ENCODE measurements at regions of chr11 and their contacts with region 1.

Region 1: GRCh38 chr11:76235233-76236091 is 29.2 kb upstream of the WNT11 start:
- DNase-seq: peak; percentile 86
- H3K4me3 Mint-ChIP-seq: peak overlapping the region; percentile 89
- H3K27ac Mint-ChIP-seq: peak overlapping the region; percentile 90
- H3K4me1 Mint-ChIP-seq: peaks cover 49% of the 10 kb centered on the region
- H3K27me3 Mint-ChIP-seq: peaks cover 15% of the 10 kb centered on the region

Region 2: DNA sequence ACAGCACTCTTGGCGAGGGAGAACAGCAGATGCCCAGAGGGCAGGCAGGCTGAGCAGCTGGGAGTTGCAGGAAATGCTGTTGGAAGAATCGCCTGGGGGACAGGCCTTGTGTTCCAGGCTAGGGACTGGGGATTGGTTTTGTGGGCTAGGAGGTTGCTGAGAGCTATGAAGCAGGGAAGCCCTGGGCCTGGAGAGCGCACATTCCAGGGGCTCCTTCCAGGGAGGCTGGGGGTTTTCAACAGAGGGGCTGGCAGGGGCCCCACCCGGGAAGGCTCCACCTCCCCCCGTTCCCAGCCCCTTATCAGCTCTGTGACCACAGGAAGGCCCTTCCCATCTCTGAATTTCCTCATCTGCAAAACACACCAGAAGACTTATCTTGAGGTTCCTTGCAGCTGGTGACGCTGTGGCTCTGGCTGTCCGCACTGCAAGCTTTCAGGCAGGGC is 50.9 kb before region 1 on chr11:
- intact Hi-C with region 1: no loop called
- DNase-seq: no peak
- H3K4me3 Mint-ChIP-seq: no peak overlapping the region
- H3K27ac Mint-ChIP-seq: no peak overlapping the region
- H3K4me1 Mint-ChIP-seq: no peaks in the 10 kb centered on the region
- H3K27me3 Mint-ChIP-seq: no peaks in the 10 kb centered on the region

Region 3: DNA sequence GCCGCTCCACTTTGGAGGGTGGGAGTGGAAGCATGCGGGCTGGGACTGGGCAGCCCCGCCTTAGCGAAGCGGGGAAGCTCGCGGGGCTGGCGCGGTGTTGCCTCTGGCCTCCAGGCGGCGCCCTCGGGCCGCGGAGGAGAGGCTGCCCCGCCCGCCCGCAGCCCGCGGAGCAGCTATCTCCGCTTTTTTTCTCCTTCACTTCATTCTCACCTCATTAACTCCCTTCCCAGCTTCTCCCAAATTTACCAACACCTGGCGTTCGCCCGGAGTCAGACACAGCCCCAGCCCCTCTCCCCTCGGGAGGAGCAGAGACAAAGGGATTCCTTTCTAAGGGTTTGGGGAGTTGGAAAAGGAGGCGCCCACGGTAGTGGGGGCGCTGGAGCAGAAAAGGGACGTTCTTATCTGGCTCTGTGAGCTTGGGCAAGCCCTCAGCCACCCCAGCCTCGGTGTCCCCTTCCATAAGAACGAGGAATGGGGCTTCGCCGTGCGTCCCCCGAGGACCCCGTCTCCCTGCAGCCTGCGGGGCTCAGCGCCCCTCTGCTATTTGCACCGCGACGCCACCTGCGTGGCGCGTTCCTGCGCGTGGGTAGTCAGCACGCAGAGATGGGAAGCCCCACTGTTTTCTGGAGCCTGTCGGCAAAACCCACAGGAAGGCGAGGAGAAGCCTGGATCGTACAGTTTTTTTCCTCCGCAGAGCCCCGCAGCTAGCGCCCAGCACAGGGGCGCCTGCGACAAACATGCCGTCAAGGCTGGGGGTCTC is 27.6 kb before region 1 on chr11:
- intact Hi-C with region 1: loop called (anchors 1 kb)
- DNase-seq: peak; percentile 70
- H3K4me3 Mint-ChIP-seq: peak overlapping the region; percentile 76
- H3K27ac Mint-ChIP-seq: no peak overlapping the region
- H3K4me1 Mint-ChIP-seq: peaks cover 9% of the 10 kb centered on the region
- H3K27me3 Mint-ChIP-seq: peaks cover 58% of the 10 kb centered on the region

Region 4: DNA sequence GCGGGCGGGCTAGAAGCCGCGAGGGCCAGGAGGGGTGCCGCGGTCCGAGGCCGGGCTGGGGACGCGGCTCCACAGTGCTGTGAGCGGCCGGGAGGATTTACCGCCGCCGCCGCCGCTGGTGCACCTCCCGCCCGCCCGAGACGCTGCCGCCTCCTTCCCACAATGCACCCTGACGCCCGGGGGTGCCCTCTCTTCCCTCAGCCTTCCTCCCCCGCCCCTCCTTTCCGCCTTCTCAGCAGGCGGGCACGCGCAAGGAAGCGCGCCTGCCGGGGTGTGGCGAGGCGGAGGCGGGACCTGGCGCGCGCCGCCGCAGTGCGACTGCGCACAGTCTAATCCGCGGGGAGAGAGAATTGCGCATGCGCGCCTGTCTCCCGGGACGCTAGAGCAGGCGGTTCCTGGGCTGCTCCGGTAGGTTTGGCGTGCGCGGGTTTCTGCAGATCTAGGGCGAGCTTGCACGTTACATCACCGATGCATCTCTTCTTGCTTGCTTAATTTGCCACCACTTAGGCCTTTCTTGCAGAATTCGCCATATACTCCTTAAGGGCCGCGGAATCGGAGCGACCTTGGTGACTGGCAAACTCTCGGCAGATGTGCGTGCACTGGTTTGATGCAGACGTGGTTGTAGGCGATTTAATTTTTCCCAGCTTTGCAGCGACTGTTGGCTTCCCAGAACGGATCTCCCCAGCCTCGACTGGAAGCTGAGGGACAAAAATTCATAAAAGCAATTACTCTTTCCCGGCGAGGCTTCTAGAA is 145.7 kb after region 1 on chr11 and contains the starts of genes GVQW3 and THAP12:
- intact Hi-C with region 1: loop called (anchors 1 kb)
- DNase-seq: peak; percentile 96
- H3K4me3 Mint-ChIP-seq: peak within 1 kb of the TSS; percentile 95
- H3K27ac Mint-ChIP-seq: peak within 1 kb of the TSS; percentile 89
- H3K4me1 Mint-ChIP-seq: peaks cover 49% of the 10 kb centered on the region
- H3K27me3 Mint-ChIP-seq: no peaks in the 10 kb centered on the region
- total RNA-seq, gene GVQW3: 4.3 and 4.4 TPM in 2 replicates
- total RNA-seq, gene THAP12: 63.1 and 66.0 TPM in 2 replicates

Region 5: DNA sequence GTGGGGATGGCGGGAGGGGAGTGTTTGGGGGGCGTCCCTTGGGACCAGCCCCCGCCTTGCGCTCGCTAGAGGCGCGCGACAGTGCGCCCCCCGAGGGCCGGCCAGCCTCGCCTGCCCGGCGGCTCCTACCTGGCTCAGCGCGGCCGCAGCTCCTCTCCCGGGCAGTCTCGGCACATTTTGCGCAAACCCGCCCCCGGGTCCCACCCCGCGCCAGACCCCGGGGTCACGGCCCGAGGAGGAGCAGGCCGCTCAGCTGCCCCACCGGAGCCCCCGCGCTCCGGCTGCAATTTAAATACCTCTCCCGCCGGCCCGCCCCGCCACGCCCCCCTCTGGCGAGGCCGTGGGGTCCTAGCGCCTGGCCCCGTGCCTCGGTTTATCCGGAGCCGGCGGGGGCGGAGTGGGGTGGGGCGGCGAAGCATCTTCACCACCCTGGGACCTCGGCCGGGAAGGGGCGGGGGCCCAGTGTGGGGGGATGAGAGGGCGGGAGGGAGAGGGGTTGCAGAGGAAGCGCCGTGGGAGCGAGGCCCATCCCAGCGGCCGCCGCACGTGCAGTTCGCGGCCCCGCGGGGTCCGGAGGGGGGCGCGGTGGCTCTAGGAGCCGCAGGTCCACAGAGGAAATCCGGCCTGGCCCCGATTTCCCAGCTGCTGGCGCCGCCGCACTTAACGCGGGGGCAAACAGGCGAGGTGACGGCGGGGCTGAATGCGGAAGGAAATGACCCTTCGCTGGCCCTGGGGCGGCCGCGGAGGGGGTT is 435.2 kb after region 1 on chr11 and contains the start of gene LRRC32:
- intact Hi-C with region 1: loop called (anchors 10 kb)
- DNase-seq: no peak
- H3K4me3 Mint-ChIP-seq: peak within 1 kb of the TSS; percentile 84
- H3K27ac Mint-ChIP-seq: no peak within 1 kb of the TSS
- H3K4me1 Mint-ChIP-seq: peaks cover 60% of the 10 kb centered on the region
- H3K27me3 Mint-ChIP-seq: peaks cover 3% of the 10 kb centered on the region
- total RNA-seq, gene LRRC32: 26.5 and 26.7 TPM in 2 replicates

Measured in activated T-helper 2 cell treated with anti-CD3 and anti-CD28 coated beads, Interferon-gamma antibody, Interleukin-2, Interleukin-4, amounts not matched to agents 10 μg/mL and 5 μg/mL and 100 μg/mL, durations not matched to agents 14 hours and 24 hours and 36 hours (primary cell).